ENCODE measurements at regions of chr14 and their contacts with region 1.

Region 1: GRCh38 chr14:90060312-90060964 is 1.4 kb upstream of the KCNK13 start:
- DNase-seq: peak in 8 of 9 donors; percentile 9 to 73 (median 24)
- ATAC-seq: peak; percentile 70
- H3K4me3 ChIP-seq: peak overlapping the region; percentile 41
- H3K4me3 Mint-ChIP-seq: peak overlapping the region; percentile 46 to 88 (median 78)
- H3K27ac ChIP-seq: no peak overlapping the region
- H3K27ac Mint-ChIP-seq: no peak overlapping the region
- H3K4me1 ChIP-seq: peaks cover 0 to 12% of the 10 kb centered on the region in 2 donors
- H3K4me1 Mint-ChIP-seq: peaks cover 16 to 30% (median 23%) of the 10 kb centered on the region in 7 donors
- H3K27me3 ChIP-seq: peaks cover 0 to 11% of the 10 kb centered on the region in 2 donors
- H3K27me3 Mint-ChIP-seq: peaks cover 63 to 76% (median 72%) of the 10 kb centered on the region in 5 donors

Region 2: DNA sequence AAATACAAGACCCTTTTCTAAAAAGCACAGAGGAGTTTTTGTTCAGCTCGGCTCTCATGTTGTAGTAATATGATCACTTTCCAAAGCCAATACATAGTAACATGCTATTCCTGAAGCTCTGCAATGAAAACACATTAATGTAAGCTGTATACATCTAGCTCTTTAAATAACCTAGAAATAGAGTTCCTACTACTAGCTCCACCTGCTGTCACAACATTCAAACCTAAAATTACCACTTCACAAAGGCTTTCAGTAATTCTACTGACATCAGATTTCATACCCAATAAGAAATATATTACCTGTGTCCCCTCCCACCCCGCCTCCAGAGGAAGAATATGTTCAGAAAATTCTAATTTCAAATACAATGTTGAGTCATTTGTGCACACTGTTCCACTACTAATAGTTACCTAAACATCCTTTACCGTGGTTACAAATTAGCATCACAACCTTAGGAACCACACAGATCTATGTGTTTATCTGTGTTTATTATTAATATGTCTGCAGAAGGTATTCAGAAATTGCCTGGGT is 123.7 kb before region 1 on chr14:
- CTCF ChIA-PET with region 1: no interaction called
- POLR2A ChIA-PET with region 1: no interaction called
- intact Hi-C with region 1: loop called (anchors 1 to 5 kb)
- DNase-seq: no peak
- ATAC-seq: no peak
- H3K4me3 ChIP-seq: no peak overlapping the region
- H3K4me3 Mint-ChIP-seq: no peak overlapping the region
- H3K27ac ChIP-seq: no peak overlapping the region
- H3K27ac Mint-ChIP-seq: no peak overlapping the region
- H3K4me1 ChIP-seq: no peaks in the 10 kb centered on the region
- H3K4me1 Mint-ChIP-seq: no peaks in the 10 kb centered on the region
- H3K27me3 ChIP-seq: no peaks in the 10 kb centered on the region
- H3K27me3 Mint-ChIP-seq: peaks cover 0 to 5% (median 0%) of the 10 kb centered on the region in 5 donors

Region 3: DNA sequence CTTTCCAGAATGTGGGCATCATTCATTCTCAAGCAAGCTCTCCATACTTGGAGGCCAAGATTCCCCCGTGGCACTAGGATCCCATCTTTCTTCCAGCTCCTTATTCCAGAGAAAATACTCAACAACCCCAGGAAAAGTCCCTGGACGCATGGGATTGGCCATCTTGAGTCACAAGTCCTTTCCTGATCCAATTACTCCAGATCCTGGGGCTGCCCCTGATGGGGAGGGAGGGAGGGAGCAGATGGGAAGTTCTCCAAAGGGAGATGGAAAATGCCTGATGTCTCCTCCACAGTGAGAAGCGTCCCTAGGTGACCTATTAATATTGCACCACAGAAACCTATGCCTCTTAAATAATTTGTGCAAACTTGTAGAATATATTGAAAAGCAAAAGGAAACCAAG is 11.0 kb before region 1 on chr14:
- CTCF ChIA-PET with region 1: no interaction called
- POLR2A ChIA-PET with region 1: no interaction called
- intact Hi-C with region 1: no loop called
- DNase-seq: no peak
- ATAC-seq: no peak
- H3K4me3 ChIP-seq: no peak overlapping the region
- H3K4me3 Mint-ChIP-seq: no peak overlapping the region
- H3K27ac ChIP-seq: no peak overlapping the region
- H3K27ac Mint-ChIP-seq: no peak overlapping the region
- H3K4me1 ChIP-seq: no peaks in the 10 kb centered on the region
- H3K4me1 Mint-ChIP-seq: peaks cover 0 to 4% (median 0%) of the 10 kb centered on the region in 7 donors
- H3K27me3 ChIP-seq: no peaks in the 10 kb centered on the region
- H3K27me3 Mint-ChIP-seq: peaks cover 26 to 37% (median 30%) of the 10 kb centered on the region in 5 donors

Region 4: GRCh38 chr14:90093942-90094595 is 33.6 kb after region 1 on chr14:
- CTCF ChIA-PET with region 1: no interaction called
- POLR2A ChIA-PET with region 1: no interaction called
- intact Hi-C with region 1: loop called in 1 of 2 experiments (anchors 2 kb)
- DNase-seq: no peak
- ATAC-seq: peak; percentile 61
- H3K4me3 ChIP-seq: no peak overlapping the region
- H3K4me3 Mint-ChIP-seq: peak overlapping the region in 1 of 10 donors; percentile 76
- H3K27ac ChIP-seq: no peak overlapping the region
- H3K27ac Mint-ChIP-seq: peak overlapping the region in 1 of 9 donors; percentile 86
- H3K4me1 ChIP-seq: no peaks in the 10 kb centered on the region
- H3K4me1 Mint-ChIP-seq: peaks cover 0 to 16% (median 0%) of the 10 kb centered on the region in 7 donors
- H3K27me3 ChIP-seq: no peaks in the 10 kb centered on the region
- H3K27me3 Mint-ChIP-seq: peaks cover 0 to 39% (median 20%) of the 10 kb centered on the region in 5 donors

Region 5: GRCh38 chr14:91009501-91010152 is 949.2 kb after region 1 on chr14:
- CTCF ChIA-PET with region 1: no interaction called
- POLR2A ChIA-PET with region 1: no interaction called
- intact Hi-C with region 1: no loop called
- DNase-seq: peak in 7 of 9 donors; percentile 17 to 60 (median 33)
- ATAC-seq: peak; percentile 86
- H3K4me3 ChIP-seq: no peak overlapping the region
- H3K4me3 Mint-ChIP-seq: peak overlapping the region in 9 of 10 donors; percentile 26 to 77 (median 62)
- H3K27ac ChIP-seq: no peak overlapping the region
- H3K27ac Mint-ChIP-seq: peak overlapping the region; percentile 29 to 81 (median 46)
- H3K4me1 ChIP-seq: peaks cover 0 to 28% of the 10 kb centered on the region in 2 donors
- H3K4me1 Mint-ChIP-seq: peaks cover 30 to 49% (median 44%) of the 10 kb centered on the region in 7 donors
- H3K27me3 ChIP-seq: no peaks in the 10 kb centered on the region
- H3K27me3 Mint-ChIP-seq: no peaks in the 10 kb centered on the region

Measured in naive thymus-derived CD4-positive, alpha-beta T cell (primary cell).